Activated CD4-positive, alpha-beta T cell treated with anti-CD3 and anti-CD28 coated beads for 36 hours (primary cell): ENCODE measurements at regions of chr3 and their contacts with region 1.

Region 1: DNA sequence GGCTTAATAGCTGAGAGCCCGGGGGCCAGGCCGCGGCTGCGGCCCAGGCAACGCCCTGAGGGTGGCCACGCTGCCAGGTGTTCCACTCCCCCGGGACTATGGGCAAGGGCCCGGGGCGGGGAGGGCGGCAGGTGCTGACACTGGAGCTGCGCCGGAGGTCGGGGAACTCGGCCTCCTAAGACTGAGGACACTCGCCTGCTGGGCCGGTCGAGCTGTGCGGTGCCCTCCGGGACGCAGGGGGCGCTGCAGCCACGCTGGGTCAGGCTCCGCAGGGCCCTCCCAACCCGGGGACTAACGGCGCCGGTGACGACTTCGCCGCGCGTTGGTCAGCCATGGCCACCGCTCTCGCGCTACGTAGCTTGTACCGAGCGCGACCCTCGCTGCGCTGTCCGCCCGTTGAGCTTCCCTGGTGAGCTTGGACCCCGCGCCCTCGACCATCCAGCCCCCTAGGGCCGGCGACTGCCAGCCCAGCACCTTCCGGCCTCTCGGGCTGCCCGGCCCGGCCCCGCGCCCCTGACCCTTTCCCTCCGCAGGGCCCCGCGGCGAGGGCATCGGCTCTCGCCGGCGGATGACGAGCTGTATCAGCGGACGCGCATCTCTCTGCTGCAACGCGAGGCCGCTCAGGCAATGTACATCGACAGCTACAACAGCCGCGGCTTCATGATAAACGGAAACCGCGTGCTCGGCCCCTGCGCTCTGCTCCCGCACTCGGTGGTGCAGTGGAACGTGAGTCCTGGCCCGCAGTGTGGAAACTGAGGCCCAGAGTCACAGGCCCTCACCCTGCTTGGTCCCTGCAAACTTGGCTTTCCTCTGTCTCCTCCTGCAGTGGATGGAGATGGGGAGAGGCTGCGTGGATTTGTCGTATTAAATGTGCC is at the start of gene NDUFAF3:
- DNase-seq: peak; percentile 96
- ATAC-seq: peak; percentile 78
- H3K4me3 Mint-ChIP-seq: peak within 1 kb of the TSS; percentile 95
- H3K27ac Mint-ChIP-seq: peak within 1 kb of the TSS; percentile 96
- H3K4me1 Mint-ChIP-seq: peaks cover 60% of the 10 kb centered on the region
- H3K27me3 Mint-ChIP-seq: no peaks in the 10 kb centered on the region
- total RNA-seq, gene NDUFAF3: 90.8 to 108 TPM

Region 2: GRCh38 chr3:47475570-47476329 is 1546.3 kb before region 1 on chr3 and contains the start of gene SCAP:
- CTCF ChIA-PET with region 1: no interaction called
- POLR2A ChIA-PET with region 1: no interaction called
- intact Hi-C with region 1: loop called in 1 of 2 experiments (anchors 10 kb)
- DNase-seq: peak; percentile 98
- ATAC-seq: peak; percentile 95
- H3K4me3 Mint-ChIP-seq: peak within 1 kb of the TSS; percentile 89
- H3K27ac Mint-ChIP-seq: peak within 1 kb of the TSS; percentile 84
- H3K4me1 Mint-ChIP-seq: peaks cover 33% of the 10 kb centered on the region
- H3K27me3 Mint-ChIP-seq: no peaks in the 10 kb centered on the region
- total RNA-seq, gene SCAP: 44.5 to 51.2 TPM

Region 3: GRCh38 chr3:48478596-48479555 is 543.2 kb before region 1 on chr3:
- CTCF ChIA-PET with region 1: no interaction called
- POLR2A ChIA-PET with region 1: no interaction called
- intact Hi-C with region 1: no loop called
- DNase-seq: peak; percentile 71
- ATAC-seq: peak; percentile 79
- H3K4me3 Mint-ChIP-seq: peak overlapping the region; percentile 60
- H3K27ac Mint-ChIP-seq: peak overlapping the region; percentile 82
- H3K4me1 Mint-ChIP-seq: peaks cover 31% of the 10 kb centered on the region
- H3K27me3 Mint-ChIP-seq: no peaks in the 10 kb centered on the region

Region 4: DNA sequence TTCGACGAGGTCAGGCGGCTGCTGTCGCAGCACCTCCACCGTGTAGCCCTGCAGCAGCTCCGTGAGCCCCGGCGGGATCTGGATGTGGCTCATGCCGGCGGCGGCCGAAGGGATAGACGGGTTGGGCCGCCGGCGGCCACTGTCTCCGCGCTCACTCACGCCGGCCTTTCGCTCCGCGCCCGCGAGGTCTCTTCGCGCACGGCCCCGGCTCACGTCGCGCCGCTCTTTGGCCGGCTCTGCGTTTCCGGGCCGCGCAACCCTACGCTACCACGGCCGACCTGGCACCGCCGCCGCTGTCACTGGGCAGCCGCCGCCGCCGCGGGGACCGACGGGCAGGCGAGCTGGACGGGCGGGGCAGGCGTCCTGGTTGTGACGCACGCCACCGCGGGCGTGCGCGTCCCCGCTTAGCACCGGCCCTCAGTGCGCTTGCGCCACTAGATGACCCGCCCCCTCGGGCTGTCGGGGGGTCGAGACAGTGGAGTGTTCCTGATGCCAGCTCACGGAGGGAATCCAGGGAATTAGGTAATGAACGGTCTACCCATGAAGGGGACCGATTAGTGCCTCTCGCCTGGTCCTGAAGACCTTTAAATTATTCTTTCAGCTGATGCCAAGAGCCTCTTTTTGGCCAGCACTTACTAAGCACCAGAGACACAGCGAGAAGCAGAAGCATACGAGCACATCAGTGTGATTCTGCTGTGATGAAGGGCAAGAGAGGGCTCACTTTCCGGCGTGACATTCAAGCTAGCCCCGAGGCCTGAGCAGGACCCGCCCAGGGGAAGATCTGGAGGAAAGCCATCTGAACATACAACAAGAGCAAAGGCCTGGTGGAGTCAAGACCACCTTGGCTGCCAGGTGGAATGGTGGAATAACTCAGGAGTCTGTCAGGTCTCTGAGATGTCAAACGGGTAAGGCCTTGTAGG is 174.3 kb before region 1 on chr3 and contains the start of gene PRKAR2A:
- CTCF ChIA-PET with region 1: no interaction called
- POLR2A ChIA-PET with region 1: no interaction called
- intact Hi-C with region 1: loop called in 1 of 2 experiments (anchors 1 kb)
- DNase-seq: peak; percentile 89
- ATAC-seq: peak; percentile 89
- H3K4me3 Mint-ChIP-seq: peak within 1 kb of the TSS; percentile 82
- H3K27ac Mint-ChIP-seq: peak within 1 kb of the TSS; percentile 87
- H3K4me1 Mint-ChIP-seq: peaks cover 26% of the 10 kb centered on the region
- H3K27me3 Mint-ChIP-seq: no peaks in the 10 kb centered on the region
- total RNA-seq, gene PRKAR2A: 28.7 to 35.2 TPM

Region 5: GRCh38 chr3:48877671-48878070 is 144.4 kb before region 1 on chr3:
- CTCF ChIA-PET with region 1: no interaction called
- POLR2A ChIA-PET with region 1: no interaction called
- intact Hi-C with region 1: no loop called
- DNase-seq: no peak
- ATAC-seq: no peak
- H3K4me3 Mint-ChIP-seq: no peak overlapping the region
- H3K27ac Mint-ChIP-seq: no peak overlapping the region
- H3K4me1 Mint-ChIP-seq: no peaks in the 10 kb centered on the region
- H3K27me3 Mint-ChIP-seq: no peaks in the 10 kb centered on the region

Region 6: GRCh38 chr3:48989796-48990635 is 32.0 kb before region 1 on chr3 and contains the start of gene P4HTM:
- CTCF ChIA-PET with region 1: interaction called, 43 read pairs
- POLR2A ChIA-PET with region 1: interaction called, 8 read pairs
- intact Hi-C with region 1: loop called (anchors 1 to 2 kb)
- DNase-seq: peak; percentile 90
- ATAC-seq: peak; percentile 76
- H3K4me3 Mint-ChIP-seq: peak within 1 kb of the TSS; percentile 95
- H3K27ac Mint-ChIP-seq: peak within 1 kb of the TSS; percentile 93
- H3K4me1 Mint-ChIP-seq: peaks cover 35% of the 10 kb centered on the region
- H3K27me3 Mint-ChIP-seq: no peaks in the 10 kb centered on the region
- total RNA-seq, gene P4HTM: 25.7 to 30.4 TPM

Region 7: DNA sequence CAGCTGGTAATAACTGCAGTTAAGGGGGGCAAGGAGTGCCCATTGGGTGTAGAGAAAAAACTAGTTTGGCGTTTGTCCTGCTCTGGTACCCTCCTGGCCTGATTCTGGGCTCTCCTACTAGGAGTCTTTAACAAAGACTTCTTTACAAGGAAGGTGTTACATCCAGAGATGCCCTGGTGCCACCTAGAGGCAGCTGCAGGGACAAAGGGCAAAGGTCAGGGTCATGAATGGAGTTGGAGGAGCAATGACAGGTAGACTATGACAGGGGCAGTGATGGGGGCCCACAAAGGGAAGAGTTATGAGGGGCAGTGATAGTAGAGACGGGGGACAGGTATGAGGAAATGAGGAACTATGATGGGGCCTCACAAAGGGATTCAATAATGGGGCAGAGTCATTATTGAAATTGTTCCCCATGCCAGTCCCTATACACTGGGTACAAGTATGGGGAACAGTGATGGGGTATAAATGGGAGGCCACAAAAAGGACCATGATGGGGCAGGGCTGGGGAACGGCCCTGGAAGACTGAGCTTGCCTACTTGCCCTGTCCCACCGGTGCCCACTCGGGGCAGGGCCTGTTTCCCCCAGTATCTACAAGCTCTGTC is 136.2 kb after region 1 on chr3:
- CTCF ChIA-PET with region 1: no interaction called
- POLR2A ChIA-PET with region 1: no interaction called
- intact Hi-C with region 1: loop called in 1 of 2 experiments (anchors 1 kb)
- DNase-seq: peak; percentile 81
- ATAC-seq: peak; percentile 82
- H3K4me3 Mint-ChIP-seq: no peak overlapping the region
- H3K27ac Mint-ChIP-seq: no peak overlapping the region
- H3K4me1 Mint-ChIP-seq: peaks cover 14% of the 10 kb centered on the region
- H3K27me3 Mint-ChIP-seq: no peaks in the 10 kb centered on the region

Region 8: DNA sequence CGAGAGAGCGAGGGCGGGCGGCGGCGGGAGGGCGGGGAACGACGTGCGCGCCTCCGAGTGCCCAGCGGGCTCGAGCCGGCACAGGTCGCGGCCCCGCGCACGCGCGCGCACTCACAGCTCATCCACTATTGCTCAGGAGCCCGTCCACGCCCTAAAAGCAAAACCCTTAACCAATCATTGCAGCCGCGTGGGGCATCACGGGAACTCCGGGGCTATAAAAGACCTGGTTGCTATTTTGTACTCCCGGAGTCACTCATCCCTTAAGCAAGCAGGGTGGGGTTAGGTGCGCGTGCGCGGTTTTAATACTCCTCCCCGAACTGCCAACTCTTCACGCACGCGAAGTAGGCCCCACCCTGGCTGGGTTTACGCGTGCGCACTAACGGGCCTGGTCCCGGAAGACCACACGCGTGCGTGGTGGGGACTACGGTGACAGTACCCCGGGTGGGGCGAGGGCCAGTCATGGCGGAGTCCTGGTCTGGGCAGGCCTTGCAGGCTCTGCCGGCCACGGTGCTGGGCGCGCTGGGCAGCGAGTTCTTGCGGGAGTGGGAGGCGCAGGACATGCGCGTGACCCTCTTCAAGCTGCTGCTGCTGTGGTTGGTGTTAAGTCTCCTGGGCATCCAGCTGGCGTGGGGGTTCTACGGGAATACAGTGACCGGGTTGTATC is 390.1 kb after region 1 on chr3 and contains the starts of genes RHOA and TCTA:
- CTCF ChIA-PET with region 1: no interaction called
- POLR2A ChIA-PET with region 1: interaction called, 3 read pairs
- intact Hi-C with region 1: loop called in 1 of 2 experiments (anchors 1 kb)
- DNase-seq: peak; percentile 99
- ATAC-seq: peak; percentile 88
- H3K4me3 Mint-ChIP-seq: peak within 1 kb of the TSS; percentile 97
- H3K27ac Mint-ChIP-seq: peak within 1 kb of the TSS; percentile 97
- H3K4me1 Mint-ChIP-seq: peaks cover 63% of the 10 kb centered on the region
- H3K27me3 Mint-ChIP-seq: no peaks in the 10 kb centered on the region
- total RNA-seq, gene RHOA: 438 to 449 TPM
- total RNA-seq, gene TCTA: 9.4 TPM

Region 9: GRCh38 chr3:50235716-50236496 is 1213.9 kb after region 1 on chr3 and contains the start of gene GNAI2:
- CTCF ChIA-PET with region 1: no interaction called
- POLR2A ChIA-PET with region 1: no interaction called
- intact Hi-C with region 1: loop called in 1 of 2 experiments (anchors 2 kb)
- DNase-seq: peak; percentile 99
- ATAC-seq: peak; percentile 92
- H3K4me3 Mint-ChIP-seq: peak within 1 kb of the TSS; percentile 90
- H3K27ac Mint-ChIP-seq: peak within 1 kb of the TSS; percentile 96
- H3K4me1 Mint-ChIP-seq: peaks cover 31% of the 10 kb centered on the region
- H3K27me3 Mint-ChIP-seq: no peaks in the 10 kb centered on the region
- total RNA-seq, gene GNAI2: 280 to 341 TPM